ENCODE measurements at regions of chr9 and their contacts with region 1.

Region 1: DNA sequence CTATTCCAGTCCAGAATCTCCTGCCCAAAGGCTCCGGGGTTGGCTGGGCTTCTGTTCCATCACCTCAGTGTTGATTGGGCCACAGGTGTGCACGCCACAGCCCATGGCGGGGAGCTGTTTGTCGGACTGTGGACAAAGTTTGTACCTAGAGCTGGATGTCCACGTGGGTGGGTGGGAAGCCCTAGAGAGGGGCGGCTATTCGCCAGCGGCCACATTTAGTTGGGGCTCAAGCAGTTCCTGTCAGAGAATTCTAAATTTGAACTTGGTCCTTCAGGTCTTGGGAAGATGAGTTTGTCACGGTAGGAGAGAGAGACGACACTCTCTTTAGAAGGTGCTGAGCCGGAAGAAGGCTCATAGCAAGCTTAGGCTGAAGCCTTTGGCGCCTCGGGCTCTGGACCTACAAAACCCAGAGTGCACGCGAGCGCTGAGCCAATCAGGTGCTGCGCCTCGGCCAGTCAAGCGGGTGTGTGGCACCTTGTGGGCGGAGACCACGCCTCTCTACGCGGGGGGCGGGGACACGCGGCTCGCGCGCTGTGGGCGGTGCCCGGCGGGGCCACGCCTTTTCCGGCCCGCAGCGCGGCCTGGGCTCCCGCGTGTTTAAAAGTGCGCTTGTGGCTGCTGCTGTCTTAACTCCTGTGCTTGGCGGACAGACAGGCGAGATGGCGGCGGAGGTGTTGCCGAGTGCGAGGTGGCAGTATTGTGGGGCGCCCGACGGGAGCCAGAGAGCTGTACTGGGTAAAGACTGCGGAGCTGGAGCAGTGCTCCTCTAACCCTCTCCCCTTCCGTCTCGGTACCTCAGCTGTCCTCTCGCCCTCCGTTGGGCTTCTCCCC is at the start of gene POLR1E:
- DNase-seq: peak; percentile 94 to 99 (median 98)
- ATAC-seq: peak; percentile 99
- H3K4me3 ChIP-seq: peak within 1 kb of the TSS; percentile 56 to 91 (median 72)
- H3K27ac ChIP-seq: peak within 1 kb of the TSS; percentile 14 to 55 (median 46)
- H3K4me1 ChIP-seq: peaks cover 13 to 19% (median 16%) of the 10 kb centered on the region in 3 donors
- H3K27me3 ChIP-seq: no peaks in the 10 kb centered on the region
- CTCF ChIP-seq: no peak
- total RNA-seq, gene POLR1E: 15.8 to 30.1 (median 21.3) TPM

Region 2: GRCh38 chr9:37293664-37294524 is 191.7 kb before region 1 on chr9:
- intact Hi-C with region 1: no loop called
- DNase-seq: no peak
- ATAC-seq: no peak
- H3K4me3 ChIP-seq: no peak overlapping the region
- H3K27ac ChIP-seq: no peak overlapping the region
- H3K4me1 ChIP-seq: peaks cover 0 to 3% (median 0%) of the 10 kb centered on the region in 3 donors
- H3K27me3 ChIP-seq: no peaks in the 10 kb centered on the region
- CTCF ChIP-seq: no peak

Region 3: GRCh38 chr9:37592108-37592951 is 106.7 kb after region 1 on chr9 and contains the start of gene TOMM5:
- intact Hi-C with region 1: loop called in 1 of 3 experiments (anchors 10 kb)
- DNase-seq: peak; percentile 88 to 96 (median 94)
- ATAC-seq: peak; percentile 97 to 99 (median 98)
- H3K4me3 ChIP-seq: peak within 1 kb of the TSS; percentile 59 to 97 (median 68)
- H3K27ac ChIP-seq: peak within 1 kb of the TSS; percentile 27 to 70 (median 64)
- H3K4me1 ChIP-seq: peaks cover 5 to 29% (median 8%) of the 10 kb centered on the region in 3 donors
- H3K27me3 ChIP-seq: no peaks in the 10 kb centered on the region
- CTCF ChIP-seq: no peak
- total RNA-seq, gene TOMM5: 22.8 to 40.3 (median 33.9) TPM

Region 4: GRCh38 chr9:37617832-37618231 is 132.2 kb after region 1 on chr9:
- intact Hi-C with region 1: no loop called
- DNase-seq: no peak
- ATAC-seq: no peak
- H3K4me3 ChIP-seq: no peak overlapping the region
- H3K27ac ChIP-seq: no peak overlapping the region
- H3K4me1 ChIP-seq: no peaks in the 10 kb centered on the region
- H3K27me3 ChIP-seq: no peaks in the 10 kb centered on the region
- CTCF ChIP-seq: no peak

Region 5: DNA sequence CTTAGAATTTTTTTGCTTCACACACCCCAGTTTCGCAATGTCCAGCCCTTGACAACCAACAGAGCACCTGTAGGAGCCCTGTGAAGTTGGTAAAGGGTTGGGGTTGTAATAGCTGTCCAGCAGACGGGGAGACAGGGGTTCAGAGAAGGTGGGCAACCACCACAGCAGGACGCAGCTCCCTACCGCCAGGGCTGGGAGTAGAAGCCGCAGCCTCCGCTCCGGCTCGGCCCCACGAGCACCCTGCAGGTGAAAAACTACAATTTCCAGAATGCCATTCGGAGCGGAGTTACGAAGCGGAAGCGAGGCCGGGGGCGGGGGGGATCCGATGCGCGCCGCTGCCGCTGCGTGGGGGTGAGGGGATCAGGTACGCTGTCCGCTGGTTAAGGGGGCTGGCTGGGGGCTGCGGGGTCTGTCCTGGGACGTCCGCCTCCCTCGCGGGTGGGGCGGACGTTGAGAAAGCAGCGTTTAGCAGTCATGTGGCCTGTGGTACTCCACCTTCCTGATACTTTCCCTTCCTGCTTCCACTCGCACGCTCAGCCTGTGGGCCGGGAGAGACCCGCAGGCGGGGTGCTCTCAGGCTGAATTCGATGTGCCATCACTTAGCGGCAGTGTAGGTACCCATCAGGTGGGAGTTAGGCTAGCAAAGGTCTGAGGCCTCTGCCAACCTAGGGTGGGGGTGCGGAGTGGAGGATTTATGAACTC is 268.0 kb after region 1 on chr9 and contains the start of gene TRMT10B:
- intact Hi-C with region 1: loop called in 1 of 3 experiments (anchors 10 kb)
- DNase-seq: peak; percentile 56 to 83 (median 66)
- ATAC-seq: peak; percentile 95 to 98 (median 97)
- H3K4me3 ChIP-seq: peak within 1 kb of the TSS; percentile 63 to 74 (median 70)
- H3K27ac ChIP-seq: peak within 1 kb of the TSS; percentile 23 to 75 (median 68)
- H3K4me1 ChIP-seq: peaks cover 0 to 11% (median 4%) of the 10 kb centered on the region in 3 donors
- H3K27me3 ChIP-seq: no peaks in the 10 kb centered on the region
- CTCF ChIP-seq: no peak
- total RNA-seq, gene TRMT10B: 4.0 to 7.3 (median 5.4) TPM